Transverse colon (tissue), 4 donors: ENCODE measurements at regions of chr4 and their contacts with region 1.

Region 1: GRCh38 chr4:140252742-140253555 is 99.0 kb upstream of the MAML3 start:
- DNase-seq: peak; percentile 78
- H3K4me3 ChIP-seq: peak overlapping the region; percentile 52 to 70 (median 54)
- H3K27ac ChIP-seq: peak overlapping the region; percentile 88 to 94 (median 92)
- H3K4me1 ChIP-seq: peaks cover 15 to 45% (median 18%) of the 10 kb centered on the region in 4 donors
- H3K27me3 ChIP-seq: no peaks in the 10 kb centered on the region
- CTCF ChIP-seq: peak; percentile 73 to 99 (median 93)
- EP300 ChIP-seq: no peak
- POLR2A ChIP-seq: peak; percentile 45

Region 2: GRCh38 chr4:139728840-139729239 is 524.1 kb before region 1 on chr4:
- in situ Hi-C with region 1: loop called in 3 of 4 experiments (anchors 10 to 25 kb)
- intact Hi-C with region 1: no loop called
- DNase-seq: peak; percentile 21
- H3K4me3 ChIP-seq: no peak overlapping the region
- H3K27ac ChIP-seq: peak overlapping the region in 2 of 4 donors; percentile 15 to 41
- H3K4me1 ChIP-seq: peaks cover 0 to 5% (median 3%) of the 10 kb centered on the region in 4 donors
- H3K27me3 ChIP-seq: no peaks in the 10 kb centered on the region
- CTCF ChIP-seq: no peak
- EP300 ChIP-seq: no peak
- POLR2A ChIP-seq: no peak

Region 3: GRCh38 chr4:139734875-139735380 is 518.0 kb before region 1 on chr4:
- in situ Hi-C with region 1: loop called in 2 of 4 experiments (anchors 10 to 25 kb)
- intact Hi-C with region 1: loop called (anchors 5 kb)
- DNase-seq: peak; percentile 74
- H3K4me3 ChIP-seq: peak overlapping the region; percentile 21 to 54 (median 30)
- H3K27ac ChIP-seq: peak overlapping the region; percentile 70 to 89 (median 78)
- H3K4me1 ChIP-seq: peaks cover 0 to 19% (median 11%) of the 10 kb centered on the region in 4 donors
- H3K27me3 ChIP-seq: no peaks in the 10 kb centered on the region
- CTCF ChIP-seq: peak in 4 of 5 experiments; percentile 65 to 73 (median 72)
- EP300 ChIP-seq: no peak
- POLR2A ChIP-seq: no peak

Region 4: GRCh38 chr4:140012688-140013486 is 240.1 kb before region 1 on chr4:
- in situ Hi-C with region 1: loop called (anchors 5 to 25 kb)
- intact Hi-C with region 1: no loop called
- DNase-seq: peak; percentile 78
- H3K4me3 ChIP-seq: no peak overlapping the region
- H3K27ac ChIP-seq: peak overlapping the region in 3 of 4 donors; percentile 16 to 53 (median 39)
- H3K4me1 ChIP-seq: peaks cover 0 to 28% (median 8%) of the 10 kb centered on the region in 4 donors
- H3K27me3 ChIP-seq: no peaks in the 10 kb centered on the region
- CTCF ChIP-seq: peak; percentile 46 to 83 (median 65)
- EP300 ChIP-seq: no peak
- POLR2A ChIP-seq: no peak

Region 5: GRCh38 chr4:140037357-140038030 is 215.5 kb before region 1 on chr4:
- in situ Hi-C with region 1: no loop called
- intact Hi-C with region 1: no loop called
- DNase-seq: no peak
- H3K4me3 ChIP-seq: no peak overlapping the region
- H3K27ac ChIP-seq: no peak overlapping the region
- H3K4me1 ChIP-seq: peaks cover 0 to 11% (median 3%) of the 10 kb centered on the region in 4 donors
- H3K27me3 ChIP-seq: no peaks in the 10 kb centered on the region
- CTCF ChIP-seq: no peak
- EP300 ChIP-seq: no peak
- POLR2A ChIP-seq: no peak

Region 6: DNA sequence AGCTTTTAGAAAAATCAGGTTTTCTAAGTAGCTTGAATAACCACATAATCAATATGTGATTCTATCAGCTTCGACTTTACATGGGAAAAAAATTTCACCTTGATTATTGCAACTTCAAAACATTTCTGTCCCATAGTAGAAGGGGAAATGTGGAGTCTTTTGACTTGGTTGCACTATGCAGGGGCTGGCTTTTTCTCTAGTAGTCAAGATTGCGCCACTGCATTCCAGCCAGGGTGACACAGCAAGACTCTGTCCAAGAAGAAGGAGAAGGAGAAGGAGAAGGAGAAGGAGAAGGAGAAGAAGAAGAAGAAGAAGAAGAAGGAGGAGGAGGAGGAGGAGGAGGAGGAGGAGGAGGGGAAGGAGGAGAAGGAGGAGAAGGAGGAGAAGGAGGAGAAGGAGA is 183.9 kb before region 1 on chr4:
- in situ Hi-C with region 1: no loop called
- intact Hi-C with region 1: loop called (anchors 5 kb)
- DNase-seq: no peak
- H3K4me3 ChIP-seq: no peak overlapping the region
- H3K27ac ChIP-seq: no peak overlapping the region
- H3K4me1 ChIP-seq: peaks cover 0 to 14% (median 0%) of the 10 kb centered on the region in 4 donors
- H3K27me3 ChIP-seq: no peaks in the 10 kb centered on the region
- CTCF ChIP-seq: no peak
- EP300 ChIP-seq: no peak
- POLR2A ChIP-seq: no peak

Region 7: DNA sequence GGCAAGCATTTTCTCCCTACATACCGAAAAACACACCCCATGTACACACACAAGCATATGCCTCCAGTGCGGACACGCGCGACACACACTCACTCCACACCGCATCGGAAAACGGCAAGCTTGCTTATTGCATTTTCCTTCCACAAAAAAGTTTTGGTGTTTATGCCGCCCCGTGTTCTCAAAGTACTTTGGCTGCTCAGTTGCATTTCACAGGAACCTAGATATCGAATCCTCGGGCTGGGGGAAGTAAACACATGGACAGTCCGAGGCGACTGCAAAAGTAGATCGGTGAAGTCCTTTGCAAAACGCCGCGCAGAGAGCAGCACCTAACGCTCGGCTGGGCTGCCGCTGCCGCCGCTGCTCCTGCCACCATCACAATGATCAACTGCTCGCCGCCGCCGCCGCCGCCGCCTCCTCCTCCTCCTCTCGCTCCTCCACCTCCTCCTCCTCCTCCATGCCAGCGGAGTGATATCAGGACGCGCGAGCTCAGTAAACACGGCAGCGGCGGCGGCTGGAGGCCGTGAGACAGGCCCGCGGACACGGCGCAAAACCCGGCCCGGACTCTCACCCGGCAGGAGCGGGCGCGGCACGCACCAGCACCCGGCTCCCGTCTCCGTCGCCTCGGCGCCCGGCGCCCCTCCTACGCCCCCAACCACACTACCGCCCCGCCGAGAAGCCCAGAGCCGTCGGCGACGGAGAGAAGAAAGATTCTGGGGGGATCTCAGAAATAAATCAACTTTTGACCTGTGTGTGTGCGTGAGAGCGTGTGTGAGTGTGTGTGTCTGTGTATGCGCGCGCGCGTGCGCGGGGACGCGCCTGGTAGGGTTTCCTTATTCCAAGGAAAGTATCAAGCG is 99.0 kb before region 1 on chr4 and contains the start of gene MAML3:
- in situ Hi-C with region 1: loop called in 2 of 4 experiments (anchors 5 kb)
- intact Hi-C with region 1: loop called (anchors 2 kb)
- DNase-seq: peak; percentile 95
- H3K4me3 ChIP-seq: peak within 1 kb of the TSS; percentile 64 to 85 (median 78)
- H3K27ac ChIP-seq: peak within 1 kb of the TSS; percentile 93 to 99 (median 98)
- H3K4me1 ChIP-seq: peaks cover 12 to 45% (median 20%) of the 10 kb centered on the region in 4 donors
- H3K27me3 ChIP-seq: no peaks in the 10 kb centered on the region
- CTCF ChIP-seq: peak in 2 of 5 experiments; percentile 2 to 23
- EP300 ChIP-seq: peak; percentile 42
- POLR2A ChIP-seq: peak; percentile 90
- total RNA-seq, gene MAML3: 16.1 to 40.0 (median 18.1) TPM

Region 8: GRCh38 chr4:140186651-140187315 is 66.2 kb before region 1 on chr4:
- in situ Hi-C with region 1: no loop called
- intact Hi-C with region 1: no loop called
- DNase-seq: peak; percentile 72
- H3K4me3 ChIP-seq: no peak overlapping the region
- H3K27ac ChIP-seq: peak overlapping the region; percentile 45 to 66 (median 56)
- H3K4me1 ChIP-seq: peaks cover 0 to 31% (median 8%) of the 10 kb centered on the region in 4 donors
- H3K27me3 ChIP-seq: no peaks in the 10 kb centered on the region
- CTCF ChIP-seq: no peak
- EP300 ChIP-seq: no peak
- POLR2A ChIP-seq: no peak